HEK293T (cell line): ENCODE measurements at regions of chr10 and their contacts with region 1.

Region 1: GRCh38 chr10:20995123-20995987 is 98.2 kb upstream of the NEBL start:
- DNase-seq: peak; percentile 15

Region 2: DNA sequence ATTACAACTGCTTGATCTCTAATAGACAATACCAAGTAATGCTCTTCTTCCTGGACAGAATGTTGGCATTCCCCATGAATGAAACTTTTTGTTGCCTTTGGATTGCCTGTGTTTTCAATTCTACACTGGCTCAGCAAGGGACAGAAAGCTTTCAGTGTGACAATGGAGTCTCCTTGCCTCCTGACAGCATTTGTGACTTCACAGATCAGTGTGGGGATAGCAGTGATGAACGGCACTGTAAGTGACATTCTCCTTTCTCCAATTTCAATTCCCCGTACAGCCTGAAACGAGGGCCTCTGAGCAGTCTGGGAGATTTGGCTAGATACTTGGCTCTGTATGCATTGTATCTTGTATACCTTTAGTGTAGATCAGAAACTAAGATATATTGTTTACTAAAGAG is 1946.5 kb before region 1 on chr10:
- CTCF ChIA-PET with region 1: interaction called, 11 read pairs
- POLR2A ChIA-PET with region 1: no interaction called
- DNase-seq: no peak

Region 3: DNA sequence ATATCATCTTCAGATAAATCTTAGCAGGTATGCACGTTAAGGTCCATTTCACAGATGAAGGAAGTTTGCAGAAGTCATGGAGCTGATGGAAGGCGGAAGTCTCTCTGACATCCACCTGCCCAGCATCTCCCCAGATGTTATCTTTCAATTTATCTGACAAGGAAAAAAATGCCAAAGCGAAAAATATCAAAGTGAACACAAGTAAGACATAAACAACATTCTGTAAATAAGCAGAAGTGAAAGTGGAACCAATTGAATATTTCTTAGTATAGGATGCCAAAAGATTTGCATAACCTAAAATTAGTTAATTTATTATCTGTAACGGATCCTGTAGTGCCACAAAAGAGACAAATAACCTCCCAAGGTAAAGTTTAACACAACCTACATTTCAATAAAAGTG is 24.6 kb before region 1 on chr10:
- CTCF ChIA-PET with region 1: no interaction called
- POLR2A ChIA-PET with region 1: no interaction called
- DNase-seq: no peak